Activated CD4-positive, alpha-beta T cell treated with anti-CD3 and anti-CD28 coated beads, Interleukin-2, amount 10 ng/mL, durations not matched to agents 24 days and 14 days (primary cell): ENCODE measurements at regions of chr1 and their contacts with region 1.

Region 1: DNA sequence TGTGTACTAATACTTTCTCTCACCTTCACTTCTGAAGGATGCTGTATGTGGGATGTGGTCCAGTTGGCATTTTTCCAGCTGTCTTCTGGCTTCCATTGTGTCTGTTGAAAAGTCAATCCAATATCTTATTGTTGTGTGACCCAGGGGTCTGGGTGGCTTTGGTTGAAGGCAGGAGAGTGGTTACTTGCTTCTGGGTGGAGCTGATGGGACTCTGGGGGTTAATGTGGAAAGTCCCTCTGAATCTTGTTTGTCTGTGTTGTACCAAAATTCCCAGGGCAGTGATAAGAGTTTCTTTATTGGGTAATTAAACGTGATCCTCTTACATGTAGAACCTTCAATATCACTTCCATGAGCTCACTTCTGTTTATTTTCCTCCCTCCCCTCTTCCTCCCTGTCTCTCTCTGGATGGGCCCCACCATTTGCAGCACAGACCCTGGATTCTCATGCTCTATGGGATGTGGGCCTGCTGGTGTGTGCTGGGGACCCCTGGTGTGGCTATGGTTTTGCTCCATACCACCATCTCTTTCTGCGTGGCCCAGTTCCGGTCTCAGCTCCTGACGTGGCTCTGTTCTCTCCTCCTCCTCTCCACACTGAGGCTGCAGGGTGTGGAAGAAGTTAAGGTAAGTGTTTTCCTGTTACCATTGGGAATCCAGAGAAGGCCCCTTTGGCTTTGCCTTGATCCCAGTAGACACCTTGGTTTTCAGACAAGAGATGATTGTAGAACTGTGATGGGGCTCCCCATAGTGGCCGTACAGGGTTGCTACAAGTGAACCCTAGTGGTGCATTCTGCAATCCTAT is 71.5 kb downstream of the HHAT start:
- DNase-seq: peak; percentile 83
- H3K4me3 Mint-ChIP-seq: peak overlapping the region; percentile 45
- H3K27ac Mint-ChIP-seq: peak overlapping the region; percentile 78
- H3K4me1 Mint-ChIP-seq: peaks cover 23% of the 10 kb centered on the region
- H3K27me3 Mint-ChIP-seq: peaks cover 15% of the 10 kb centered on the region

Region 2: DNA sequence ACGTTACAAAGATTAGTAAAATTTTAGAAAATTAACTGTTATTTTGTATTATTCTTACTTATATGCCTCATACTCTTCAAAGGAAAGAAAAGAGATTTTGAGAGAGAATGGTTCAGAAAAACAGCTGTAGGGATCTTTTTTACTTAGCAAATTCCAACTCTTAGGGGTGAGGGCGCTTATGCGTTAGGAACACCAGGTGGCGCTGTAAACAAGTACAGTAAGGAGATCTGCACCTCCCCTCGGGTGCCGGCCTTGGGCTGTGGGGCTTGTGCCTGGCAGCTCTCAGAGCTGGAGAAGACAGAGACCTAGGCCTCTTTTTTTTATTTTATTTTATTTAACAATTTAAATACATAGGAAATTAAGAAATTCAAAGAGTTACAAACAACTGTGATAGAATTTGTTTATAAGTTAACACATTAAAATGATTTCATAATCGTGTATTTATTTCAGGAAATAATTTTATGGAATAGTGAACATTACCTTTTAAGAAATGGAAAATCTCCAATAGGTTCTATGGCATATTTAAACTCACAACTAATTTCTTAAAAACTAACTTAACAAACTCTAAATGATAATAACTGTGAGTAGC is 539.9 kb before region 1 on chr1:
- intact Hi-C with region 1: loop called (anchors 10 kb)
- DNase-seq: peak; percentile 90
- H3K4me3 Mint-ChIP-seq: no peak overlapping the region
- H3K27ac Mint-ChIP-seq: no peak overlapping the region
- H3K4me1 Mint-ChIP-seq: no peaks in the 10 kb centered on the region
- H3K27me3 Mint-ChIP-seq: peaks cover 24% of the 10 kb centered on the region

Region 3: DNA sequence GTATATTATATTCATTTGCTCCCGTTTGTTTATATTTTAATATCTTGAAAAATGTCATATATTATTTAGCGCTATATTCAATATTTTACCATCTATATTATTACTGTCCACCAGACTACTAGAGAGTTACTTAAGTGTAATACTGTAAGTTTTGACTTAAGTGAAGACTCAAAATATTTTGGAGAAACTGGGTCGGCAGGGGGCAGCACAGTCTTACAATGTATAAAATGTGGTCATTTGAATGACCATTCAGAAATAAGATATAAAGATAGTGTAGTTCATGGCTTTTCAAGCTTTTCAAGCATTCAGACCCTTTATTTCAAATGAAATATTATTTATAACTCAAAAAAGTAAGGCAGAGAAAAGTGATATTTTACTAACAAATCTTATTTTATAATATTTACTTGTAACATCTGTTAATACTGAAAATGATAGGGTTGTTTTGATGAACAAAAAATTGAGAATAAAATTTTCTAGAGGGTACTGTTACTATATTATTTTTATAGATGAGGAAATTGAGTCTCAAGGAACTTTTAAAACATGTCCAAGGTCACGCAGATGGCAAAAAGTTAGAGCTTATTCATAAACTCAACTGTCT is 256.7 kb before region 1 on chr1:
- intact Hi-C with region 1: loop called (anchors 1 kb)
- DNase-seq: peak; percentile 80
- H3K4me3 Mint-ChIP-seq: no peak overlapping the region
- H3K27ac Mint-ChIP-seq: no peak overlapping the region
- H3K4me1 Mint-ChIP-seq: no peaks in the 10 kb centered on the region
- H3K27me3 Mint-ChIP-seq: peaks cover 12% of the 10 kb centered on the region

Region 4: GRCh38 chr1:210360852-210361477 is 39.3 kb before region 1 on chr1:
- intact Hi-C with region 1: loop called (anchors 1 kb)
- DNase-seq: no peak
- H3K4me3 Mint-ChIP-seq: no peak overlapping the region
- H3K27ac Mint-ChIP-seq: no peak overlapping the region
- H3K4me1 Mint-ChIP-seq: peaks cover 2% of the 10 kb centered on the region
- H3K27me3 Mint-ChIP-seq: no peaks in the 10 kb centered on the region

Region 5: DNA sequence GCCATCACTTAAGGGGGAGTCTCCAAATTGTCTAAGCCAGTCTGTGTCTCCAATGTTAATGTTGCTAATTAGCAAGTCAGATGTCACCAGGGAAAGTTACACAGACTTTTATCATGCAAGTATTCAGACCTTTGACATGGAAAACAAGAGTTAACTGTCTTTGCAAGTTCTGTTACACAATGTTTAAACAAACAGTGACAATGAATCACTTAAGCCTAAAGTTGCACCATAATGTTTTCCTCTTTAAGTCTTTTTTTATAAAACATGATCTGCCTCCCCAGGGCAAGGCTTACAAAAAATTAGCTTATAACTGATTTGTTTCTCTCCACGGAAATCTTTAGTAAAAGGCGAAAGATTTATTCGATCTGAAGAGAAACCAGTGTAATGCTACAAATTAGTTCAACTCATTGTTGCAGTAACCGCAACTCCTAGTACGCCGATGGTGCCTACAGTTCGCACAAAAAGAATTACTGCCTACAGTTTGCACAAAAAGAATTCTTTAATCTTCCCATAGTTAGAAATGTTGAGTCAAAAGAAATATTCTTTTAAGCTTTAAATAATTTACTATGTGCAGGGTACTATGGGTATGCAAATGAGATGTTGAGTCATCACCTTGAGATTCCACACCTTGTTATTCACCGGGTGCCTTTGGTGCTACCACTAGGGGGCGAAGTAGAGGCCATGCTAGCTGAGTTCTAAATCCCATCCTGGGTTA is 26.2 kb before region 1 on chr1:
- intact Hi-C with region 1: loop called (anchors 1 kb)
- DNase-seq: peak; percentile 88
- H3K4me3 Mint-ChIP-seq: no peak overlapping the region
- H3K27ac Mint-ChIP-seq: peak overlapping the region; percentile 75
- H3K4me1 Mint-ChIP-seq: peaks cover 9% of the 10 kb centered on the region
- H3K27me3 Mint-ChIP-seq: peaks cover 13% of the 10 kb centered on the region